CD8-positive, alpha-beta T cell (primary cell): ENCODE measurements at regions of chr14 and their contacts with region 1.

Region 1: DNA sequence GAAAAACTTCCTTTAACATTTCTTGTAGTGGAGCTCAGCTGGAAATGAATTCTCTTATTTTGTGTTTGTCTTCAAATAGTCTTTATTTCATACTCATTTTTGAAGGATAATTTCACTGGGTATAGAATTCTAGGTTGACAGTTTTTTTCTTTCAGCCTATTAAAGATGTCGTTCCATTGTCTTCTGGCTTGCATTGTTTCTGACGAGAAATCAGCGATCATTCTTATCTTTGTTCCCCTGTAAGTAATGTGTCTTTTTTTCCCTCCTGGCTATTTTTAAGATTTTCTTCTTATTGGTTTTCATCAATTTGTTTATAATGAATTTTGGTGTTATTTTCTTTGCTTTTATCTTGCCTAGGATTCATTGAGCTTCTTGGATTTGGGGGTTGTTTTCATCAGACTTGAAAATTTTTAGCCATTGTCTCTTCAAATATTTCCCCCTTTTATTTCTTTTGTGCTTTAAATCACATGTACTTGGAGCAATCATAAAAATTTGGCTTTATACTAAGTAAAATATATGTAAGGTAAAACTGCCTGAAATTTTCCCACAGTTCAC is 89.4 kb downstream of the UNC79 start:
- DNase-seq: no peak
- ATAC-seq: no peak
- H3K4me3 ChIP-seq: no peak overlapping the region
- H3K4me3 Mint-ChIP-seq: no peak overlapping the region
- H3K27ac ChIP-seq: no peak overlapping the region
- H3K27ac Mint-ChIP-seq: no peak overlapping the region
- H3K4me1 ChIP-seq: no peaks in the 10 kb centered on the region
- H3K4me1 Mint-ChIP-seq: no peaks in the 10 kb centered on the region
- H3K27me3 ChIP-seq: no peaks in the 10 kb centered on the region
- H3K27me3 Mint-ChIP-seq: peaks cover 7% of the 10 kb centered on the region
- CTCF ChIP-seq: no peak

Region 2: DNA sequence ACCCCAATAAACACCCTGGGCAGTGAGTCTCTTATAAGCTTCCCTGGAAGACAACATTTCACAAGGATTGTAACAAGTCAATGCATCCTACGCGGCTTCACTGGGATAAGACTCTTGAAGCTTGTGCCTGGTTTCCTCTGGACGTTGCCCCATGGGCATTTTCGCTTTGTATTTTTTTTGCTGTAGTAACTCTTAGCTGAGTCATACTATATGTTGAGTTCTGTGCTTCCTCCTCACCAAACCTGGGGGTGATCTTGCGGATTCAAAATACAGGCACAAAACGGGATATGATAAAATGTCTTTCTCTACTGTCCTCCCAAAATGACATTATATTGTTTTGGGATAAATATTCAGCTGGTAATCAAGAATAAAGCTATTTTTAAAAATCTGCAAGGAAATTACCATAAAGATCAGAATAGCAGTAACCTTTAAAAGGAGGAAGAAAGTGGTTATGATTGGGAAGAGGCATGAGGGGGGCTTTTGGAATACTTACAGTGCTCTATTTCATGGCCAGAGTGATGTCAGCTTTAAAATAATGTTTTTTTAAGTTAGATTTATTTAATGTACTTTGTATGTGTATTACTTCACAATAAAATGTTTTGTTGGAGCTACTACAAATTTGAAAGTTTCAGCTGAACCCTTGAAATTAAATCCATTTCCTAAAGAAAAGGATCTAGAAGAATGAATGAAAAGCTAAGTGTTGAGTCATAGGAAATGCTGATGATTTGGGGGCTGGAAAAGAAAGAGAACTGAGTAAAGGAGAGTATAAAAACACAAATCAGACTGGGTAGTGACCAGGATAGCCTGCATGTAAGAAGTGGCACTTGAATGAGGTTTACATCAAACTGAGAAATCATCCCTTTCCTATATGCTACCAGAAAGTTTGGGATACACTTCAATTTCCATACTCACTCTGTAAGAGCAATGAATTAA is 202.0 kb before region 1 on chr14:
- CTCF ChIA-PET with region 1: no interaction called
- POLR2A ChIA-PET with region 1: no interaction called
- intact Hi-C with region 1: no loop called
- DNase-seq: no peak
- ATAC-seq: no peak
- H3K4me3 ChIP-seq: no peak overlapping the region
- H3K4me3 Mint-ChIP-seq: no peak overlapping the region
- H3K27ac ChIP-seq: no peak overlapping the region
- H3K27ac Mint-ChIP-seq: no peak overlapping the region
- H3K4me1 ChIP-seq: peaks cover 4% of the 10 kb centered on the region
- H3K4me1 Mint-ChIP-seq: peaks cover 44% of the 10 kb centered on the region
- H3K27me3 ChIP-seq: no peaks in the 10 kb centered on the region
- H3K27me3 Mint-ChIP-seq: no peaks in the 10 kb centered on the region
- CTCF ChIP-seq: no peak

Region 3: GRCh38 chr14:93381644-93382043 is 138.5 kb before region 1 on chr14:
- CTCF ChIA-PET with region 1: no interaction called
- POLR2A ChIA-PET with region 1: no interaction called
- intact Hi-C with region 1: no loop called
- DNase-seq: no peak
- ATAC-seq: no peak
- H3K4me3 ChIP-seq: no peak overlapping the region
- H3K4me3 Mint-ChIP-seq: no peak overlapping the region
- H3K27ac ChIP-seq: no peak overlapping the region
- H3K27ac Mint-ChIP-seq: no peak overlapping the region
- H3K4me1 ChIP-seq: no peaks in the 10 kb centered on the region
- H3K4me1 Mint-ChIP-seq: no peaks in the 10 kb centered on the region
- H3K27me3 ChIP-seq: no peaks in the 10 kb centered on the region
- H3K27me3 Mint-ChIP-seq: peaks cover 16% of the 10 kb centered on the region
- CTCF ChIP-seq: no peak

Region 4: DNA sequence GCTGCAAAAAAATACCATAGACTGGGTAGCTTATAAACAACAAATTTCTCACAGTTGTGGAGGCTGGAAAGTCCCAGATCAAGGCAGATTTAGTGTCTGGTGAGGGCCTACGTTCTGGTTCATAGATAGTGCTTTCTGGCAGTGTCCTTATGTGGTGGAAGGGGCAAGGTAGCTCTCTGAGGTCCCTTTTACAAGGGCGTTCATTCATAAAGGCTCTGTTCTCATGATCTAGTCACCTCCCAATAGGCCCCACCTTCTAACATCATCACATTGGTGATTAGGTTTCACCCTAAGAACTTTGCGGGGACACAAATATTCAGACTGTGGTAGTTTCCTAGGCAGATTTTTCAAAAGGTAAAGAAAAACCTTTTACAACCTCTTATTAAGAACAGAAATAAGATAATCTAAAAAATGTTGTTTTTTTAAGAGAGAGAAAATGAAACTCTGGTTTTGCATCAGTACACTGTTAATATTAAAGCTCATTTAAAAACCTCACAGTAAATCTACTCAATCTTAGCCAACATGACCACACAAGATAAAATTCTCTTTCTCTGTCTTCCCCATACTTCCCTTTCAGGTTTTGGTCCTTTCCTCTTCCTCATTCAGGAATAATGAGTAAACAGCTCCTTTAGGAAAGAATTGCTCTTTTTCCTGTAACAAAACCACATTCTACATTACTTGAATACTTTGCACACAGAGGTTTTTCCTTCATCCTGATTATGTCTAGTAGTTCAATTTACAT is 28.1 kb after region 1 on chr14:
- CTCF ChIA-PET with region 1: no interaction called
- POLR2A ChIA-PET with region 1: no interaction called
- intact Hi-C with region 1: loop called in 1 of 2 experiments (anchors 1 kb)
- DNase-seq: no peak
- ATAC-seq: no peak
- H3K4me3 ChIP-seq: no peak overlapping the region
- H3K4me3 Mint-ChIP-seq: no peak overlapping the region
- H3K27ac ChIP-seq: no peak overlapping the region
- H3K27ac Mint-ChIP-seq: no peak overlapping the region
- H3K4me1 ChIP-seq: no peaks in the 10 kb centered on the region
- H3K4me1 Mint-ChIP-seq: no peaks in the 10 kb centered on the region
- H3K27me3 ChIP-seq: no peaks in the 10 kb centered on the region
- H3K27me3 Mint-ChIP-seq: peaks cover 21% of the 10 kb centered on the region
- CTCF ChIP-seq: no peak

Region 5: DNA sequence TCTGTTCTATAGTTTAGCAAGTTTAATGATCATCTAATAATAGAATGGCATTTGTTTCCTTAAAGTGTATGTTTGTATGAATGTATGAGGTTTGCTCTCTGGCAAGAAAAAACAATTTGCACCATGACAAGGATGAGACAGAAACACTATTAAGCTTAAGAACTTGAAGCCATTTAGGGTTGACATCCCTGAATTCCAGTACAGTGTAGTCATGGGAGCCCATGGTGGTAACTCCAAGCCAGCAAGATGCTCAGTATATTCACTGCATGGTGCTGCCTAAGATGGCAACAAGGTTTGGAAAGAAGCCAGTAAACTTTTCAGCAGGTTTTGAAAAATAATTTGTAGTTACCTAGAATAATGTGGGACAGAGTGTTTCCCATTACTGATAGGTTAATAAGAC is 109.5 kb after region 1 on chr14:
- CTCF ChIA-PET with region 1: no interaction called
- POLR2A ChIA-PET with region 1: no interaction called
- intact Hi-C with region 1: no loop called
- DNase-seq: no peak
- ATAC-seq: no peak
- H3K4me3 ChIP-seq: no peak overlapping the region
- H3K4me3 Mint-ChIP-seq: no peak overlapping the region
- H3K27ac ChIP-seq: no peak overlapping the region
- H3K27ac Mint-ChIP-seq: no peak overlapping the region
- H3K4me1 ChIP-seq: no peaks in the 10 kb centered on the region
- H3K4me1 Mint-ChIP-seq: no peaks in the 10 kb centered on the region
- H3K27me3 ChIP-seq: peaks cover 0 to 2% of the 10 kb centered on the region in 2 experiments
- H3K27me3 Mint-ChIP-seq: peaks cover 16% of the 10 kb centered on the region
- CTCF ChIP-seq: no peak

Region 6: DNA sequence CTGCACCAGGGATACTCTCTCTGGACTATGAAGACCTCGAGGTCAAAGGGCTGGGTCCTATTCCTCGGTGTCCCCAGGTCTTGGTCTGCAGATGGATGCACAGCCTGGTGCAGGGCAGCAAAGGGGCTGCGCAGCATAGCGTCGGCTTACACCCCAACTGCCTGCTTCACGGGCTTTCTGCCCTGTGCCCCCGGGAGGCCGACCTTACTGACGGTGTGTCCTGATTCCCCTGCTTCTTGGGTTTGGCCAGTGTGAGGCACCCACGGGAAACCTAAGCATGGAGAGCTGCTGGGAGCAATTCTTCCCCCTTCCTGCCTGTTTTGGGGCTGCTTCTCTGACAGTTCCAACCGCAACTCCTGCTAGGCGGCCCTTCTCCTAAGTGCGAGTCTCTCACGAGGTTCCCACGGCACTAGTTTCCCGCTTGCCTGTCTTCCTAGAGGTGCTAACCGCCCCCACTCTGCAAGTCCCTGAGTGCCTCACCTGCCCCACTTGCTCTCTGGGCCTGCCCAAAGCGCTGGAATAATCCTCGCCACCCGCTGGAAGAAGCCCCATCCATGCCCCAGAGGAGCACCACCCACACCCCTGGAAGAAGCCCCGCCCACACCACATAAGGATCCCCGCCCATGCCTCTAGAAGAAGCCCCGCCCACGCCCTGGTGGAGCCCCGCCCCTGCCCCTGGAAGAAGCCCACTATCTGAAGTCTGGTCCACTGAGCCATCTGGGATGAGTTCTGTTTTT is 214.1 kb after region 1 on chr14:
- CTCF ChIA-PET with region 1: no interaction called
- POLR2A ChIA-PET with region 1: no interaction called
- intact Hi-C with region 1: no loop called
- DNase-seq: no peak
- ATAC-seq: no peak
- H3K4me3 ChIP-seq: no peak overlapping the region
- H3K4me3 Mint-ChIP-seq: no peak overlapping the region
- H3K27ac ChIP-seq: no peak overlapping the region
- H3K27ac Mint-ChIP-seq: no peak overlapping the region
- H3K4me1 ChIP-seq: no peaks in the 10 kb centered on the region
- H3K4me1 Mint-ChIP-seq: no peaks in the 10 kb centered on the region
- H3K27me3 ChIP-seq: no peaks in the 10 kb centered on the region
- H3K27me3 Mint-ChIP-seq: peaks cover 12% of the 10 kb centered on the region
- CTCF ChIP-seq: no peak